Left cardiac atrium (tissue), 4 donors: ENCODE measurements at regions of chr3 and their contacts with region 1.

Region 1: GRCh38 chr3:159763602-159764489 is 224.8 kb upstream of the IL12A start:
- DNase-seq: peak; percentile 82
- ATAC-seq: peak; percentile 72 to 76

Region 2: GRCh38 chr3:159528251-159528895 is 235.5 kb before region 1 on chr3:
- intact Hi-C with region 1: no loop called
- DNase-seq: no peak
- ATAC-seq: no peak

Region 3: GRCh38 chr3:159616212-159616825 is 147.5 kb before region 1 on chr3:
- intact Hi-C with region 1: loop called in 1 of 2 experiments (anchors 5 kb)
- DNase-seq: peak; percentile 40
- ATAC-seq: peak; percentile 62 to 70

Region 4: DNA sequence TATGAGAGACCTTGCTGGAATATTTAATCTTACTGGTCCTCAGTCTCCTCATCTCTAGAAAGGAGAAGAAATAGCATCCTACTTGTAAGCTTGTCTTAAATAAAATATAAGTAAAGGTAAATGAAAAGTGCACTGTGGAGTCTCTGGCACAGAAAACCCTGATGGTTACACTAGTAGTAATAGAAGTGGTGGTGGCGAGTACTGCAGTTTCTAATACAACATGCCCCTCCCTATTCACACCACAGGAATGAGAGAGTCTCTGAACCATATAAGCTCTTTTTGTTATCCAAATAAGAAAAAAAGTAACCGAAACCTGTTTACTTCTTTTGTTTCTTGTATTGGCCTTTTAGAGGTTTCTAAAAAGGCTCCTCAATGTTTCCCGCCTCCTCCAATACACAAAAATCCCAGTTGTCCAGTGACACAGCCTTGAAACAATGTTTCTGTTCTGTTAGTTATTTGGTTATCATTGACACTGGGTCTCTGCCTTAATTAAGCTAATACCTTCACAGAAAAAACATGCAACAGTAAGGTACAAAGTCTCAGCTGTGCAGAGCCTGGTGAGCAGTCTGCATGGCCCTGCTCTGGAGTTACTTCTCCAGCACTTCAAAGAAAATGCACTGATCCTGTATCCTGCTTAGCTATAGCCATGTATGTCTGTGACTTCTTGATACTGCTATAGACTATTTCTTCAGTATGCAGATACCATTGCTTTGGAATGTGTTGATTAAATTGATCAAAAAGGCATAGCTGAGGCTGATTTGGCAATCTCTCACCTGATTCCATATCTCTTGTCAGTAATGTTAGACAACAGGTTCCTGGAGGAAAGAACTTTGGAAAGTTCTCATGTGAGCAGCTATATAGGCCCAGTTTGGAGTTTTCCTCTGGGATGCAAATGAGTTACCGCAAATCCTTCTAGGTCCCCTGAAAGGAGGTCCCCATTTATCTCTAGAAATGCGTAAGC is 90.8 kb before region 1 on chr3:
- intact Hi-C with region 1: loop called in 1 of 2 experiments (anchors 10 kb)
- DNase-seq: no peak
- ATAC-seq: no peak

Region 5: DNA sequence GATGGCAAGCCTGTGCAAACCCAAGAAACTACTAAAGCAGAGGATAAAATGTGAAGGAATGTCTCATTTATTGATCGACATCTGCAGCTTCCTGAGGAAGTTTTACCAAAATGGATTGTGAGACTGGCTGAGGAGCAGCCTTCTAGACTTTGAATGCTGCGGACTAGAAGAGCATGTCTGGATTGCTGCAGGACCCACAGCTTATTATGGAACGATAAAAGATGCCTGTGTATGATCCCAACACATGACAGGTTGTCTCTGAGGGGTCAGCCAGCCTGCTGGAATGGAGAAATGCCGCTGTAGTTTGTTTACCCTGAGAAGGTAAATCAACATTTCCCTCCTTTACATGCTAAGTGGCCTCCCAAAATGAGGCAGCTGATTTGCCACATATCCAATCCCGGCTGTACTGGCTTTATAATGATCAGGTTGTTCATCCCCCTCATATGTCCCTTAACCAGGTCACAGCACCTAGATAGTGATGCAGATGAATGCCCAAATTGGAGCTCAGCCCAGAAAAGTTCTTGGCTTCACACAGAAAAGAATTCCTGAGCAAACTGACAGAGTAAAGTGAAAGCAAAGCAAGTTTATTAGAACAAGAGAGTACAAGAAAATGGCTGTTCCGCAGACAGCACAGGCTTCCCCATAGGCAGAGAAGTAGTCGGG is 288.7 kb after region 1 on chr3:
- intact Hi-C with region 1: no loop called
- DNase-seq: no peak
- ATAC-seq: peak in 1 of 2 donors; percentile 47